Heart right ventricle (tissue), 16 donors: ENCODE measurements at regions of chr20 and their contacts with region 1.

Region 1: GRCh38 chr20:35207950-35208611 is 18.4 kb upstream of the MMP24 start:
- DNase-seq: peak; percentile 66 to 90
- ATAC-seq: peak; percentile 91 to 98 (median 96)
- H3K4me3 ChIP-seq: peak overlapping the region in 7 of 10 donors; percentile 1 to 32 (median 24)
- H3K27ac ChIP-seq: peak overlapping the region; percentile 36 to 82 (median 60)
- H3K4me1 ChIP-seq: peaks cover 0 to 13% (median 5%) of the 10 kb centered on the region in 9 donors
- H3K27me3 ChIP-seq: no peaks in the 10 kb centered on the region
- CTCF ChIP-seq: peak; percentile 77 to 89 (median 82)

Region 2: DNA sequence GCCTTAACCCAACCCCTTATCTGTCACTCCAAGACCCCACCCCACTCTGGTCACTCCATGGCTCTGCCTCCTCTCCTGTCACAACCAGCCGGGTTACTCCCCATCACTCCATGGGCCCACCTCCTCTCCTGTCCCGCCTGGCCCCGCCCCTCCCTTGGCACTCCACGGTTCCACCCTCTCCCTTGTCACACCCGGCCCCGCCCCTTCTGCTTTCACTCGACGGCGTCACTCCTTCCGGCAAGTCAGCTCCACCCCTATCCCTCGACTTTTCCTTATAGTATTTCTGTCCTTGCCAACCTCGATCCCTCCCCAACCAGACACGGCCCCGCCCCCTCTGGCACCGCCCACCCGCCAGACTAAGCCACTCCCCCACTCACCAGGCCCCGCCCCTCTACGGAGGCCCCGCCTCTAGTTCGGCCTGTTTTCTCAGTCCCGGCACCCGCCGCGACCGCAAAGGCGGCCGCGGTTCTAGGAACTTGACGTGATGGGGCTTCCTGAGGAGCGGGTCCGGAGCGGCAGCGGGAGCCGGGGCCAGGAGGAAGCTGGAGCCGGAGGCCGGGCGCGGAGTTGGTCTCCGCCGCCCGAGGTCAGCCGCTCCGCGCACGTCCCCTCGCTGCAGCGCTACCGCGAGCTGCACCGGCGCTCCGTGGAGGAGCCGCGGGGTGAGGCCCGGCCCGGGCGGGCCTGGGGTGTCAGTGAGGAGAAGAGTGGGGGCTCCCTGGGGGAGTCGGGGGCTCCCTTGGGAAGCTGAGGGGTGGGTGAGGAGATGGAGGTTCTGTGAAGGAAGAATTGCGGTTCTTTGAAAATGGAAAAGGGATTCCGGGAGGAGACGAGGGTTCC is 331.7 kb before region 1 on chr20 and contains the start of gene ACSS2:
- intact Hi-C with region 1: loop called in 3 of 10 experiments (anchors 2 to 5 kb)
- DNase-seq: peak; percentile 99 to 100
- ATAC-seq: peak; percentile 89 to 95 (median 92)
- H3K4me3 ChIP-seq: peak within 1 kb of the TSS; percentile 52 to 94 (median 76)
- H3K27ac ChIP-seq: peak within 1 kb of the TSS; percentile 49 to 91 (median 89)
- H3K4me1 ChIP-seq: peaks cover 8 to 57% (median 48%) of the 10 kb centered on the region in 9 donors
- H3K27me3 ChIP-seq: peaks cover 0 to 4% (median 0%) of the 10 kb centered on the region in 7 donors
- CTCF ChIP-seq: peak in 1 of 9 donors; percentile 9
- total RNA-seq, gene ACSS2: 90.2 to 125 (median 104) TPM

Region 3: DNA sequence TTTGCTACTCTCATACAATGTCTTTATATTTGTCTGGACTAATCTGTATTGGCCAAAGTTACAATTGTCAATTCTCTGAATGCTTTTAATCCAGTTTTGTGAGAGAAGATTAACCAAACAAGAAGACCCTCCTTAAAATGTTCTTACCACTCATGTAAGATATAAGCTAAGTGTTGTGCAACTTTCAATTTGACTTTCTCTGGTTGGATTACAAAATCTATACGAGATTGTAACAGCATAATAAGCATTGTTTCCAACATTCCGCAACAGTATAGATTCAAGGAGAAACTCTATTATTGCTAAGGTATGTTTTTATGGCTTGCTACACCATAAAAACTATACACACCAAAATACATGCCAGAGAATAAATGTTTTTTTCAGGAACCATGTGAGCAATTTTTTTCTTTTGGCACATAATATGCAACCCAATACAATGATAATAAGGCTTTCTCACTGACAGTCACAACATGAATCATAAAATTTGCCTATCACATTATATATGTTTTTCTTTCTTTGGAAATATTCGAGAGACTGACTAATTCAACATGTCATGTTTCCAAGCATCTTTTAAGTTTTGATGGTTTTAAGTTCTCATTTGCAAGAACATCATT is 103.3 kb before region 1 on chr20:
- intact Hi-C with region 1: loop called in 5 of 10 experiments (anchors 5 kb)
- DNase-seq: no peak
- ATAC-seq: no peak
- H3K4me3 ChIP-seq: no peak overlapping the region
- H3K27ac ChIP-seq: no peak overlapping the region
- H3K4me1 ChIP-seq: no peaks in the 10 kb centered on the region
- H3K27me3 ChIP-seq: no peaks in the 10 kb centered on the region
- CTCF ChIP-seq: no peak

Region 4: DNA sequence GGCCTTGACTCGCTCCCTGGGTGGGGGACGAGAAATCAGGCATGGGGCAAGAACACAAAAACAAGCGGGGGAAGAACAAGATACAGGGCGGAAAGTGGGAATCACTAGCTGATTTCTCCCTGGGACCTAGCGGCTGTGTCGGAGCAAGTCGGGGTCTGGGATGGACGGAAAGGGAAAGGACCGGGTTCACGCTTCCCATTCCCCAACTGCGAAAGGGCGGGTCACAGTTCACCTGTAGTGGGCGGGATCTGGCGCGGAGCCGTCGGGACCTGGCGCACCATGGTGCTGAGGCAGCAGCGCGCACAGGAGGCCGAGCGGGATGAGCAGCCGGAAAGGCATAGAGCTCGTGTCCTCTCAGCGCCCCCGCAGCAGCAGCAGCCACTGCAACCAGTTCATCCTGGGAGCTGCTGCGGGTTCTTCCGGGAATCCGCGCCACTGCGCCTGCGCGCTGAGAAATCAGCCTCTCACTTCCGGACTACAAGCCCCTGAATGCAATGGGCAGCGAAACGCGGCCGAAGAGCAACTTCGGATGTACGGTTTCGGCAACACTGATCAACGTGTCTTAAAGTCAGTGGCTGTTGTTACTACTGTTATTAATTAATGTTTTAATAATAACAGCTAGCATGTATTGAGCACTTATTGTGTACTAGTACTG is 61.0 kb before region 1 on chr20 and contains the start of gene EDEM2:
- intact Hi-C with region 1: loop called (anchors 1 to 10 kb)
- DNase-seq: peak; percentile 94 to 97
- ATAC-seq: peak; percentile 95 to 98 (median 96)
- H3K4me3 ChIP-seq: peak within 1 kb of the TSS; percentile 65 to 98 (median 86)
- H3K27ac ChIP-seq: peak within 1 kb of the TSS in 9 of 10 donors; percentile 74 to 88 (median 79)
- H3K4me1 ChIP-seq: peaks cover 6 to 44% (median 27%) of the 10 kb centered on the region in 9 donors
- H3K27me3 ChIP-seq: no peaks in the 10 kb centered on the region
- CTCF ChIP-seq: peak in 1 of 9 donors; percentile 7
- total RNA-seq, gene EDEM2: 7.2 to 26.1 (median 11.0) TPM

Region 5: GRCh38 chr20:35171753-35172433 is 36.2 kb before region 1 on chr20 and contains the start of gene PROCR:
- intact Hi-C with region 1: loop called in 1 of 10 experiments (anchors 5 kb)
- DNase-seq: peak; percentile 82 to 91
- ATAC-seq: peak; percentile 94 to 97 (median 96)
- H3K4me3 ChIP-seq: peak within 1 kb of the TSS in 9 of 10 donors; percentile 36 to 59 (median 49)
- H3K27ac ChIP-seq: peak within 1 kb of the TSS; percentile 58 to 90 (median 66)
- H3K4me1 ChIP-seq: peaks cover 2 to 41% (median 22%) of the 10 kb centered on the region in 9 donors
- H3K27me3 ChIP-seq: no peaks in the 10 kb centered on the region
- CTCF ChIP-seq: no peak
- total RNA-seq, gene PROCR: 3.0 to 21.1 (median 6.8) TPM